ENCODE measurements at regions of chr5 and their contacts with region 1.

Region 1: DNA sequence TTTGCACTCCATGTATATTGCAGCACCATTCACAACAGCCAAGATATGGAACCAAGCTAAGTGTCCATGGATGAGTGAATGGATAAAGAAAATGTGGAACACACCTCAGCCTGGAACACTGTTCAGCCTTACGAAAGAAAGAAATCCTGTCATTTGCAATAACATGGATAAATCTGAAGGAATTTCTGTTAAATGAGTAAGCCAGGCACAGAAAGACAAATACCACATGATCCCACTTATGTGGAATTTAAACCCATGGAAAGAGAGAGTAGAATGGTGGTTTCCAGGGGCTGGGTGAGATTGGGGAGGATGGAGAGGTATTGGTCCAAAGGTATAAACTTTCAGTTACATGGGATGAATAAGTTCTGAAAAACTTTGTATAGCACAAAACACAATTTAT is 228.9 kb upstream of the CD180 start:
- DNase-seq: no peak
- H3K4me3 ChIP-seq: no peak overlapping the region
- H3K27ac ChIP-seq: no peak overlapping the region
- H3K4me1 ChIP-seq: no peaks in the 10 kb centered on the region
- H3K27me3 ChIP-seq: no peaks in the 10 kb centered on the region
- CTCF ChIP-seq: no peak
- POLR2A ChIP-seq: no peak

Region 2: DNA sequence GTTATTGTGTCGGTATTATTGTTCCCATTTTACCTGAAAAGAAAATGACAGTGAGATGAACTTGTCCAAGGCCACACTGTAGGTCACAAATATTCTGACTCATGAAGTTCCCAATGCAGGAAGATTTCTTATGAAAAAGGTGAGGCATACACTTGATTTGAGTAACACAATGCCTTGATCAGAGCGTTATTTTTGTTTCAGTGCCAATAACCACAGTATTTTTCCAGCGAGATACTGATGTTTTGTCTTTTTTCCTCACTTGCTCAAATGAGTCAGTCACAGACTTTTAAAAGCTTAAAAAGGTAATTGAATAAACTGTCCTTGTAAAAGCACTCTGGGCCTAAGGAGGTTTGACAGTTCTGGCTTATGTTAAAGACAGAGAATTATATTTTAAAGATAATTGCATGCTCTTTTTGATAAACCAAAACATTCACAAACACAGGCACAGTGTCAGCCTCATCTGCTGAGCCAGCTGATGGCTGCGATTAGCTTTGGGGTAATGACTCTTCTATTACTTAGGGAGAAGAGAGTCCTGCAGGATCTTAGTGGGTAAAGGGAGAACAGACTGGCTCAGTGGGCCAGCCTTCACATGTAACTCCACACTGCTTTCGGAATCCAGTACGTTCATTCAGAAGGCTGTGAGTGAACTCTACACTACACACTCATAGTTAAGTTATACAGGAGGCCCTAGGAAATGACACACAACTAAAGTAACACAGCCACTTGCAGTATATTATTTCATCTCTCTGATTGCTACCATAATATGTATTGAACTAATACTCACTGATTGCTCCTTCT is 63.4 kb before region 1 on chr5:
- intact Hi-C with region 1: loop called (anchors 2 kb)
- DNase-seq: no peak
- H3K4me3 ChIP-seq: peak overlapping the region in 1 of 3 donors; percentile 4
- H3K27ac ChIP-seq: no peak overlapping the region
- H3K4me1 ChIP-seq: no peaks in the 10 kb centered on the region
- H3K27me3 ChIP-seq: no peaks in the 10 kb centered on the region
- CTCF ChIP-seq: no peak
- POLR2A ChIP-seq: no peak

Measured in breast epithelium (tissue), 4 donors.